Pancreas (tissue), 10 donors: ENCODE measurements at regions of chr11 and their contacts with region 1.

Region 1: DNA sequence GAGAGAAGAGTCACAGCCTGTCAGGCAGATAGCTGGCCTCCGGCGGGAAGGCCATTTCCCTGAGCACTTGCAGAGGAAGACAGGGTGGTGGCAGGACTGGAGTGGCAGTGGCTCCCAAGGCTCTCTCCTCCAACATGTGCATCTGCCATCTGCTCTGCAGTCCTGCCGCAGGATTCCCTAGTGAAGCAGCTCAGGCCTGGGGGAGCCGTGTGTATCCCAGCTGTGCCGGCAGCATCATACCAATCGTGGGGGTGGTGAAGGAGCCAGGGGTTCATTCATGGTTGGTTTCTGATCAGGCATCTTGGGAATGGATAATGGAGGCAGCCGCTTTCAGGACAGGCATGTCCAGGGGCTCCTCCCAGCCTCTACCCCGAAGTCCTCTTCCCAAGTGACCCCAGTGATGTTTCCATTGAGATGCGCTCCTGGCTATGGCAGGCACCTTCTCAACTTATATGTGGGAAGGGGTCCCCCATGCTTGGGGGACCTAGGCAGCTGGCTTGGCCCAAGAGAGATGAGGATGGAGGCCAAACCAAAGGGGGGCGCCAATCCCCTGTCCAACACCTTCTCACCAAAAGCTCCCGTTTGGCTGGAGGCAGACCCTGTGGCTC is 6.1 kb downstream of the TAGLN start:
- DNase-seq: peak in 2 of 6 donors; percentile 14 to 43
- ATAC-seq: no peak
- H3K4me3 ChIP-seq: no peak overlapping the region
- H3K27ac ChIP-seq: no peak overlapping the region
- H3K4me1 ChIP-seq: no peaks in the 10 kb centered on the region
- H3K27me3 ChIP-seq: no peaks in the 10 kb centered on the region
- CTCF ChIP-seq: no peak

Region 2: DNA sequence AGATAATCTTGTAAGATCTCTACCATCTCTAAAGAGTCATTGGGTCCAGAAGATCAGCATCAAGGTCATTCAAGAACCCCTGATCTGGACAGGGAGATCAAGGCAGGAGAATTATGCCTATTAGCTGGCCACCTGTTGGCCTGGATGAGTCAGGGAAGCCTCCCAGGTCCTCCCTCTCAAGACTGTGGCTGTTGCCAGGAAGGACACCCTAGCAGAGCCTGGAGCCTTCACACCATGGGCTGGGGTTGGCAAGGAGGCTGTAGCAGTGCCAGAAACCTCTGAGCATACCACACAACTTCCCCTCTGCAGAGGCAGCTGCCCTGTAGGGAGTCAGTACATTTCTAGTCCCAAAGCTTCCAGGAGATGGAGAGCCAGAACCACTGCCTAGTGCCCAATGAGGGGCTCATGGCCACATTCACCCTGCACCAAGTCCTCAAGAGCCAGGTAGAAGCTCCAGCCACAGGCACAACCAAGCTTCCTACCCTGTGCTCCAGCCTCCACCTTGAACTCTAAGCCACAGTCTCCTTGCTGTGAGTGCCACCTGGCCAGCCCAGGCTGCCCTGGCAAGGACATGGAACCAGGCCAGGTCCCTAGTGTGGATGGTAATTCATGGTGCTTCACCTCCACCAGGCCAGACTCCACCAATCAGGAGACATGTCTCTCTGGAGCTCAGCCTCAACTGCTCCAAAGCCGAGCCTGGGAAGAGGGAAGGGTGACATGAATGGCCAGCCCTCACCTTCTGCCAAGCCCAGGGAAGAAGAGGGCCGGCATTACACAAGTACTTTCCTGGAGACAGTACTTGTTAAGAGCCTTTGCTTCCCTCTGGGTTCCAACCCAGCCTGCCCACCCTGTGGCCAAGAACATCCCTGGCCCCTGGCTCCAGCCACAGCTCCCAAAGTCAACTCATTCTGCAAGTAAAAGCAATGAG is 556.8 kb before region 1 on chr11:
- intact Hi-C with region 1: no loop called
- DNase-seq: no peak
- ATAC-seq: no peak
- H3K4me3 ChIP-seq: no peak overlapping the region
- H3K27ac ChIP-seq: no peak overlapping the region
- H3K4me1 ChIP-seq: no peaks in the 10 kb centered on the region
- H3K27me3 ChIP-seq: no peaks in the 10 kb centered on the region
- CTCF ChIP-seq: no peak

Region 3: GRCh38 chr11:117083011-117083935 is 122.0 kb before region 1 on chr11:
- intact Hi-C with region 1: no loop called
- DNase-seq: no peak
- ATAC-seq: no peak
- H3K4me3 ChIP-seq: no peak overlapping the region
- H3K27ac ChIP-seq: no peak overlapping the region
- H3K4me1 ChIP-seq: peaks cover 3 to 12% (median 10%) of the 10 kb centered on the region in 3 donors
- H3K27me3 ChIP-seq: no peaks in the 10 kb centered on the region
- CTCF ChIP-seq: no peak

Region 4: DNA sequence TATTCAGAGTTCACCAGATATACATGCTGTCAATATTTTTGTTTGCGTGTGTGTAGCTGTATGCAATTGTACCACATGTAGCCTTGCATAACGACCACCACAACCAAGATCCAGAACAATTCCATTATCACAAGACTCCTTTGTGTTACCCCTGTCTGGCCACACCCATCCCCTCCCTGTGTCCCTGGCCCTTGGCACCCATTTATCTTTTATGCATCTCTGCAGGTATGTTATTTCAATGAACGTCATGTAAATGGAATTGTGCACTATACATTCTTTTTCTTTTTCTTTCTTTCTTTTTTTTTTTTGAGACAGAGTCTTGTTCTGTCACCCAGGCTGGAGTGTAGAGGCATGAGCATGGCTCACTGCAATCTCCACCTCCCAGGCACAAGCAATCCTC is 70.9 kb before region 1 on chr11:
- intact Hi-C with region 1: loop called in 2 of 3 experiments (anchors 5 kb)
- DNase-seq: no peak
- ATAC-seq: no peak
- H3K4me3 ChIP-seq: no peak overlapping the region
- H3K27ac ChIP-seq: no peak overlapping the region
- H3K4me1 ChIP-seq: no peaks in the 10 kb centered on the region
- H3K27me3 ChIP-seq: no peaks in the 10 kb centered on the region
- CTCF ChIP-seq: no peak

Region 5: GRCh38 chr11:117144477-117145392 is 60.6 kb before region 1 on chr11:
- intact Hi-C with region 1: no loop called
- DNase-seq: peak; percentile 72 to 81 (median 78)
- ATAC-seq: peak; percentile 59 to 72 (median 70)
- H3K4me3 ChIP-seq: peak overlapping the region; percentile 77 to 93 (median 84)
- H3K27ac ChIP-seq: peak overlapping the region; percentile 76 to 86 (median 82)
- H3K4me1 ChIP-seq: peaks cover 3 to 13% (median 7%) of the 10 kb centered on the region in 3 donors
- H3K27me3 ChIP-seq: no peaks in the 10 kb centered on the region
- CTCF ChIP-seq: no peak